Right cardiac atrium (tissue), 5 donors: ENCODE measurements at regions of chr4 and their contacts with region 1.

Region 1: GRCh38 chr4:177339477-177340374 is 30.1 kb downstream of the NEIL3 start:
- DNase-seq: no peak
- ATAC-seq: peak in 1 of 2 donors; percentile 69
- H3K4me3 ChIP-seq: no peak overlapping the region
- H3K27ac ChIP-seq: no peak overlapping the region
- H3K4me1 ChIP-seq: no peaks in the 10 kb centered on the region
- H3K27me3 ChIP-seq: no peaks in the 10 kb centered on the region

Region 2: GRCh38 chr4:176957353-176958118 is 382.2 kb before region 1 on chr4:
- intact Hi-C with region 1: no loop called
- DNase-seq: no peak
- ATAC-seq: no peak
- H3K4me3 ChIP-seq: no peak overlapping the region
- H3K27ac ChIP-seq: no peak overlapping the region
- H3K4me1 ChIP-seq: no peaks in the 10 kb centered on the region
- H3K27me3 ChIP-seq: no peaks in the 10 kb centered on the region

Region 3: DNA sequence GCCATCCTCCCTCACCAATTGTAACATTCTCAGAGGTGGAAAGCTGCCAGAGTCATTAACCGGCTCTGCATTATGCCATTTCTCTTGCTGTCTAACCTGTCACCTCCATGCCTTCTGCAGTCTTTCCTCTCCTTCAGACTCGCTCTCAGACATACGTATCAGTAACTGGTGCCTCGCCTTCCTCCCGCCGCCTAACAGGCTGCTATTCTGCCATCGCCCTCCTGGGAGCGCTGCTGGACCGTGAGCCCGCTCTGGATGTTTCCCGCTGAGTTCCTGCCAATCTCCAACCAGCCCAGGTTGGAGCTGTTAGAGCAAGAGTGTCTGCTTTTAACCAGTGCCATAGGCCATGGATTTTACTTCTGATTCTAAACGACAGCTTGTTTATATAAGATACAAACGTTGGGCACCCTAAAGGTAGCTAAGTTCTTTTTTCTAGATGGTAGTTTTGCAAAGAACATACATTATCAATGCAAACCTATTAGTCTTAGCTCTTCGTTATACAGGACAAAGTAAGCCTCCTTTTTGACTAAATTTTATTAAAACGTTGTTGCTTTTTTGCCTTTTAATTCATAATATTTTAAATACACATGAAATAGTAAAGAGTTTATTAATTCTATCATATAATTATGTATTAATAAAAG is 89.5 kb before region 1 on chr4:
- intact Hi-C with region 1: loop called (anchors 5 to 10 kb)
- DNase-seq: peak; percentile 55 to 81 (median 77)
- ATAC-seq: peak; percentile 87 to 89
- H3K4me3 ChIP-seq: no peak overlapping the region
- H3K27ac ChIP-seq: no peak overlapping the region
- H3K4me1 ChIP-seq: no peaks in the 10 kb centered on the region
- H3K27me3 ChIP-seq: no peaks in the 10 kb centered on the region

Region 4: GRCh38 chr4:177511311-177512001 is 171.7 kb after region 1 on chr4:
- intact Hi-C with region 1: no loop called
- DNase-seq: no peak
- ATAC-seq: no peak
- H3K4me3 ChIP-seq: no peak overlapping the region
- H3K27ac ChIP-seq: no peak overlapping the region
- H3K4me1 ChIP-seq: no peaks in the 10 kb centered on the region
- H3K27me3 ChIP-seq: no peaks in the 10 kb centered on the region